Activated CD4-positive, alpha-beta T cell treated with anti-CD3 and anti-CD28 coated beads for 36 hours (primary cell): ENCODE measurements at regions of chr11 and their contacts with region 1.

Region 1: GRCh38 chr11:15006139-15006759 is 34.1 kb upstream of the CALCA start:
- DNase-seq: peak; percentile 17
- ATAC-seq: peak; percentile 72
- H3K4me3 Mint-ChIP-seq: no peak overlapping the region
- H3K27ac Mint-ChIP-seq: no peak overlapping the region
- H3K4me1 Mint-ChIP-seq: no peaks in the 10 kb centered on the region
- H3K27me3 Mint-ChIP-seq: peaks cover 21% of the 10 kb centered on the region

Region 2: GRCh38 chr11:14789879-14790484 is 216.3 kb before region 1 on chr11:
- CTCF ChIA-PET with region 1: interaction called, 12 read pairs
- POLR2A ChIA-PET with region 1: no interaction called
- intact Hi-C with region 1: loop called (anchors 1 to 2 kb)
- DNase-seq: no peak
- ATAC-seq: no peak
- H3K4me3 Mint-ChIP-seq: no peak overlapping the region
- H3K27ac Mint-ChIP-seq: no peak overlapping the region
- H3K4me1 Mint-ChIP-seq: peaks cover 7% of the 10 kb centered on the region
- H3K27me3 Mint-ChIP-seq: no peaks in the 10 kb centered on the region

Region 3: DNA sequence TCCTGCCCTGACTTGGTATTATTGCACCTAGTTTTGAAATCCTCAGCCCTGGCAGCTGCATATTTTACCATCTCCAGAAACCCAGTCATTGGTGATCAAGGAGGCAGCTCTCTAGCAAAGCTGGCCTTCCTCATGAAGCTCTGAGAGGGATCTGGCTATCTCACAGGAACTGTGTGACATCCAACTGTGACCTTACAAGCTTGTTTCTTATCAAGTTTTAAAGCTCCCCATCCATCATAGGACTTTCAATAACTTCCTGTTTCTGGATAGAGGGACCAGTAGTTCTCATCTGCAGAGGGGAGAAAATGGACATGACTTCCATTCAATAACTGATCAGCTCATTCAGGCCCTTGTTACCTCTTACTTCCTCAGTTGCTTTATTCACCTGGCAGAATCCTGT is 52.3 kb before region 1 on chr11:
- CTCF ChIA-PET with region 1: interaction called, 11 read pairs
- POLR2A ChIA-PET with region 1: no interaction called
- intact Hi-C with region 1: no loop called
- DNase-seq: no peak
- ATAC-seq: no peak
- H3K4me3 Mint-ChIP-seq: no peak overlapping the region
- H3K27ac Mint-ChIP-seq: no peak overlapping the region
- H3K4me1 Mint-ChIP-seq: no peaks in the 10 kb centered on the region
- H3K27me3 Mint-ChIP-seq: no peaks in the 10 kb centered on the region

Region 4: DNA sequence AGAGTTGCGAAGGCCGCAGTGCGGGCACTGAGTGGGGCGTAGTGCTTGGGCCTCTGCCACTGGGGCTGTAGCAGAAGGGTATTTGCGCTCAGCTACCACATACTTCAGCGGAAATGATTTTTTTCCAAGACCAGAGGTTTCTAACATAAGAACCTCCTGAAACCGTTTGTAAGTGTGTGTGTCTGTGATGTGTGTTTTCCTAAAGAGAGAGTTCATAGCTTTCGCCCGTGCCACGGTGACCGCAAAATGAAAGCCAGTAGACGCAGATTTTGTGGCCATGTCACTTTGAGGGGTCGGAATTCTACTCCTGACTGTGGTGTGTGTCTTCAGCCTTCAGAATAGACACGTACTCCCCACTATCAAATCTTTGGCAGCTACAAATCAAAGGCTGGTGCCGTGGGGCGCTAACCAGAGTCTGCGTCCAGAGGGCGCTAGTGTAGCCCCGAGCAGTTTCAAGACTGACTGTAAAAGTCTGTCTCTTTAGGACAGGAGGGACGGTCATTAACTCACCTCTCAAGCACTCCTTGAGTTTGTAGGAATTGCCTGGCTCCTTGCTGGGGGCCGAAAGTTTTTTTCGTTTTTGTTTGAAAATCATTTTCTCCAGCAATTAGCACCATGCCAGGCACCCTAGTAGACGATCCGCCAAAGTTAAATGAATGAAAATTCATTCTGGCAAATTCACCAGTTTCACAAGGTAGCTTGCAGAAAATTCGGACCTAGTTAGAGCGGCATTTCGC is 31.6 kb before region 1 on chr11:
- CTCF ChIA-PET with region 1: interaction called, 72 read pairs
- POLR2A ChIA-PET with region 1: no interaction called
- intact Hi-C with region 1: loop called (anchors 1 kb)
- DNase-seq: peak; percentile 85
- ATAC-seq: peak; percentile 72
- H3K4me3 Mint-ChIP-seq: peak overlapping the region; percentile 54
- H3K27ac Mint-ChIP-seq: no peak overlapping the region
- H3K4me1 Mint-ChIP-seq: peaks cover 27% of the 10 kb centered on the region
- H3K27me3 Mint-ChIP-seq: peaks cover 67% of the 10 kb centered on the region

Region 5: GRCh38 chr11:14980854-14981253 is 25.4 kb before region 1 on chr11:
- CTCF ChIA-PET with region 1: interaction called, 72 read pairs
- POLR2A ChIA-PET with region 1: no interaction called
- intact Hi-C with region 1: no loop called
- DNase-seq: no peak
- ATAC-seq: no peak
- H3K4me3 Mint-ChIP-seq: no peak overlapping the region
- H3K27ac Mint-ChIP-seq: no peak overlapping the region
- H3K4me1 Mint-ChIP-seq: no peaks in the 10 kb centered on the region
- H3K27me3 Mint-ChIP-seq: peaks cover 34% of the 10 kb centered on the region

Region 6: DNA sequence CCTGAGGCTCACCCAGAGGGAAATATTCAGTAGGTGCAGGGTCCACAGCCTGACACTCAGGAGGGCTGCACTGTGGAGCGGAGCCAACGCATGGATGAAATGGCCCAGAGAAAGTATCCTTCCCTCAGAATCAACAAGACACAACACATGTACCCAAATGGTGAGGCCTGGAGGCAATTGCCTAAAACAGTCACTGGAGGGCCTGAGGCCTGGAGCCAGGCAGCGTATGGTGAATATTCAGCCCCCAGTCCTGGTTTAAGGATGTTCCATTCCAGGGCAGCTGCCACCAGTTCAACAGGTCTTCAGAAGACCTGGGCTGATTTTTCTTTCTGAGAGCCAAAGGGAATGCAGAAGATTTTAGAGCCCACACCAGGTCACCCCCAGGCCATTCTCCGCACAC is 373.2 kb after region 1 on chr11:
- CTCF ChIA-PET with region 1: no interaction called
- POLR2A ChIA-PET with region 1: no interaction called
- intact Hi-C with region 1: no loop called
- DNase-seq: no peak
- ATAC-seq: no peak
- H3K4me3 Mint-ChIP-seq: no peak overlapping the region
- H3K27ac Mint-ChIP-seq: no peak overlapping the region
- H3K4me1 Mint-ChIP-seq: no peaks in the 10 kb centered on the region
- H3K27me3 Mint-ChIP-seq: peaks cover 4% of the 10 kb centered on the region